Uterus (tissue), 4 donors: ENCODE measurements at regions of chr17 and their contacts with region 1.

Region 1: DNA sequence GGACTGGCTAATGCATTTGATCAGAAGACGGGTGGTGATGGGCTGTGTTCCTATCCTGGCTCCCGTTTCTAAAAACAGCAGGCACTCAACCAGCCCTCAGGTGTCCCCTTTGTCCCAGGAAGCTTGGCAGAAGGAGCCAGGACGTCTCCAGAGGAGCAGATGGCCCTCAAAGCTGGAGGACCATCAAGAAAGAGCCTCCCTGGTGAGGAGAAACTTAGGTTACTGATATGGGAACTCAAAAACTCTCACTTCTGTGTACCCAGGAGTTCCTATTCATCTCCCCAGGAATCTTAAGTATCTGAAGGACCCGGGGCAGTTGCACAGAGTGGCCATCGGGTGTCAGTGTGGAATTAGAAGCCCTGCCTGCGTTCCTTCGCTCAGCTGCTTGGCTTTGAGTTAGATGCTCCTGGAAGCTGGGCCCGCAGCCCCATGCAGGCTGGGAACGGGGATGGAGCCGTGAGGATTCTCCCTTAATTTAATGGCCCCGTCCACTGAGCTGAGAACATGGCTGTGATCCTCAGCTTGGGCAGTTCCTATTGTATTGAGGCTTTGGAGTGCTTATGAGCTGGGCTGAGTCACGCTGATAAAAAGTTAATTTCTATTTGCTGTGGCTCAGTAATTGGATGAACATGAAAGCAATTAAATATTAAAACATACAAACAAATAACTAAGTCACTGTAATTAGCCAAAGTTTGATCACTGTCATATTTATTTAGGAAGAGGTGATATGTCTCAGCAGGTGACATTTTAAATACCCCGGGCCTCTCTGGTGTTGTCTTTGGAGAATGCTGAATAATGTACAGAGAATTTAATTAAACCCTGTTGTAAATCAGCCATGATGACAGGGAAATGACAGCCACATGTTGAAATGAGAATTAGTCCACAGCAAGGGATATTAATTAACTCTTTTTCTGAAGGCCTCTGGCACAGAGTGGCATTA is 402.1 kb downstream of the SEC14L1 start:
- DNase-seq: peak; percentile 86
- H3K4me3 ChIP-seq: no peak overlapping the region
- H3K27ac ChIP-seq: peak overlapping the region; percentile 17 to 55
- H3K4me1 ChIP-seq: peaks cover 0 to 5% of the 10 kb centered on the region in 2 donors
- H3K27me3 ChIP-seq: no peaks in the 10 kb centered on the region
- CTCF ChIP-seq: peak; percentile 91 to 97 (median 94)
- POLR2A ChIP-seq: no peak

Region 2: GRCh38 chr17:77681861-77682260 is 139.0 kb after region 1 on chr17:
- intact Hi-C with region 1: no loop called
- DNase-seq: peak; percentile 46 to 67
- H3K4me3 ChIP-seq: no peak overlapping the region
- H3K27ac ChIP-seq: no peak overlapping the region
- H3K4me1 ChIP-seq: no peaks in the 10 kb centered on the region
- H3K27me3 ChIP-seq: no peaks in the 10 kb centered on the region
- CTCF ChIP-seq: no peak
- POLR2A ChIP-seq: no peak

Region 3: DNA sequence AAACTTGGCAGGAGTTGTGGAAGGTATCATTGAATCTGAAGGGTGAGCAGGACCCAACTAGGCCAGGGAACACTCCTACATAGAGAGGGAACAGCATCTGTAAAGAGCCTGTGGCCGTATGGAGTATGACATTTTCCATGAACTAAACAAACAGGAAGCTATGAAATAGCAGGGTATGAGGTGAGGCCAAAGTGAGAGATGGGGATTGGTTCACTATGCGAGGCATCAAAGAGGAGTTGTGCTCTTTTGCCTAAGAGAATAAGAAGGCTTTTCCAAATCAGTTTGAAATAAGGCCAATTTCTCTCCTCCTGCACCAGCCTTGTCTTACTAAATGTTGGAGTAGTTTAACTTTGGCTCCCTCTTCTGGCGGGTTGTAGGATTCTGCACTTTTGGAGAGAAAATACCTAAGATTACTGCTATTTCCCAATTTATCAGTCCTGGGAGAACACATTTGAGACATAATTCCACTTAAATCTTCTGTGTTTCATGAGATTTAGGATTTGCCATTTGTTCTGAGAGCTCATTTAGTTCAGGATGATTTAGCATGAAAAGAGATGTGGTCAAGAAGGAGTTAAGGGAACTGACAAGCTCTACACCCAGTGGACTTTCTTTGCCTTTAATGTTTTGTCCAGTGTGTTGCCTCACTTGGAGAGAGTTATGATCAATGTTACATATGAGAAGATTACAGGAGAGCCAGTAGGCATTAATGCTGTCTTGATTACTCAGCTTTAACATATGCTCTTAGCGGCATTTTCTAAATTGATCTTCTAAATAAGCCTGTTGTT is 471.1 kb after region 1 on chr17:
- intact Hi-C with region 1: loop called (anchors 5 kb)
- DNase-seq: peak; percentile 50 to 72
- H3K4me3 ChIP-seq: no peak overlapping the region
- H3K27ac ChIP-seq: no peak overlapping the region
- H3K4me1 ChIP-seq: no peaks in the 10 kb centered on the region
- H3K27me3 ChIP-seq: no peaks in the 10 kb centered on the region
- CTCF ChIP-seq: peak; percentile 67 to 85 (median 78)
- POLR2A ChIP-seq: no peak